Ovary (tissue), 10 donors: ENCODE measurements at regions of chr1 and their contacts with region 1.

Region 1: GRCh38 chr1:46667782-46668760 is at the start of gene ATPAF1:
- DNase-seq: peak; percentile 54 to 81 (median 69)
- H3K4me3 ChIP-seq: peak within 1 kb of the TSS; percentile 80
- H3K27ac ChIP-seq: peak within 1 kb of the TSS in 1 of 2 donors; percentile 37
- H3K4me1 ChIP-seq: peaks cover 3% of the 10 kb centered on the region
- H3K27me3 ChIP-seq: no peaks in the 10 kb centered on the region
- CTCF ChIP-seq: no peak
- EP300 ChIP-seq: no peak
- POLR2A ChIP-seq: peak; percentile 24
- total RNA-seq, gene ATPAF1: 21.9 to 40.0 (median 29.3) TPM

Region 2: DNA sequence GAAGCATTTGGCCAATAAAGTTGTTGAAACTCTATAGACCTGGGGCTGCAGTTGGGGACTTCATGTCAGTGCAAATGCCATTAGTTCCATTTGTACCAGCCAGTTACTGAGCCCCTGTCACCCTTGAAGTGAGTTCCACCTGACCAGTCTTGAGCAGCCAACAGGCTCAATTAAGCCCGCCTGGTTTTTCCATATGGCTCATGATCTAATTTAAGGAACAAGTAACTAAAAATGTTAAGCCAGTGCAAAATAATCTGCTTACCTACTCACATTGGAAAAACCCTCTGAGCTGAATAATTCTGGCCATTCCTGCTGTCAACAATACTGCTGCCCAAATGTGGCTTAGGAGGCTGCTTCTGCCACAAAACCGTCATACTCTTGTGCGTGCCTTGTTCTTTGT is 305.9 kb before region 1 on chr1:
- intact Hi-C with region 1: no loop called
- DNase-seq: no peak
- H3K4me3 ChIP-seq: no peak overlapping the region
- H3K27ac ChIP-seq: no peak overlapping the region
- H3K4me1 ChIP-seq: no peaks in the 10 kb centered on the region
- H3K27me3 ChIP-seq: no peaks in the 10 kb centered on the region
- CTCF ChIP-seq: no peak
- EP300 ChIP-seq: no peak
- POLR2A ChIP-seq: no peak

Region 3: GRCh38 chr1:46616277-46617107 is 51.6 kb before region 1 on chr1 and contains the start of gene MOB3C:
- intact Hi-C with region 1: loop called in 2 of 4 experiments (anchors 5 kb)
- DNase-seq: peak; percentile 84 to 88 (median 85)
- H3K4me3 ChIP-seq: peak within 1 kb of the TSS; percentile 79
- H3K27ac ChIP-seq: peak within 1 kb of the TSS; percentile 65 to 95
- H3K4me1 ChIP-seq: peaks cover 7% of the 10 kb centered on the region
- H3K27me3 ChIP-seq: no peaks in the 10 kb centered on the region
- CTCF ChIP-seq: no peak
- EP300 ChIP-seq: no peak
- POLR2A ChIP-seq: peak; percentile 70
- total RNA-seq, gene MOB3C: 10.1 to 25.3 (median 19.3) TPM

Region 4: GRCh38 chr1:46653405-46653958 is 14.6 kb before region 1 on chr1:
- intact Hi-C with region 1: no loop called
- DNase-seq: no peak
- H3K4me3 ChIP-seq: no peak overlapping the region
- H3K27ac ChIP-seq: no peak overlapping the region
- H3K4me1 ChIP-seq: no peaks in the 10 kb centered on the region
- H3K27me3 ChIP-seq: no peaks in the 10 kb centered on the region
- CTCF ChIP-seq: no peak
- EP300 ChIP-seq: no peak
- POLR2A ChIP-seq: no peak